Activated CD4-positive, alpha-beta T cell treated with anti-CD3 and anti-CD28 coated beads, Interleukin-2, amount 10 ng/mL, durations not matched to agents 24 days and 14 days (primary cell): ENCODE measurements at regions of chr21 and their contacts with region 1.

Region 1: DNA sequence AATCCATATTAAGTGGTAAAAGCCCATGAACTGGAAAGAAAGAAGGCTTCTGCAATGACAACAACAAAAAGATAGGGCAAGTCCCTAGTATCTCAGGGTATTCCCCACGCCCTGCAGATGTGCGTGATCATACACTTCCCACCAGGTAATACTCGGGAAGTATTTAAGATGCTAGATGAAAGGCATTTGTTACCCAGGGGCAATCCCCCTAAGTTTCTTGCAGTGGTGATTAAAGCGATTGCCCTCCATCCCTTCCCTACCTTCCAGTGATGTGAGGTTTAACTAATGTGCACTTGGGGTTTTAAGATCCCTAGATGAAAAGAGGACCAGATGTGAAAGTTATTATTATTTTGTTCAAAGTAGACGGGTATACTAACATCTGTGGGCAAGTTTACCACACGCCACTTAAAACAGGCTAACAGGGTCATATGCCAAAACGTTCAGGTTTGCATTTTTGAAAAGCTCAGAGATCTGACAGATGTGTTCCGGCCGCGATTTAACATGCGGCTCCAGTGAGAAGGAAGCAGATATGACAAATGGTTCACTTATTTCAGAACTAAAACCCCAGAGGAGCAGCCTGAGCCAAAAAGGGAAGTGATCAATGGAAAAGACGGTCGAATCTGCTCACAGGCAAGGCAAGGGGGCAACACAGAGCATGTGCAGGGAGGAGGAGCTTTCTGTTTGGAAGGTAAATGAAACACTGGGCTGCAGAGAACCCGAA is 17.4 kb downstream of the TIAM1 start:
- DNase-seq: peak; percentile 80
- H3K4me3 Mint-ChIP-seq: peak overlapping the region; percentile 74
- H3K27ac Mint-ChIP-seq: peak overlapping the region; percentile 92
- H3K4me1 Mint-ChIP-seq: peaks cover 28% of the 10 kb centered on the region
- H3K27me3 Mint-ChIP-seq: no peaks in the 10 kb centered on the region

Region 2: GRCh38 chr21:31140676-31141075 is 186.0 kb before region 1 on chr21:
- intact Hi-C with region 1: no loop called
- DNase-seq: no peak
- H3K4me3 Mint-ChIP-seq: no peak overlapping the region
- H3K27ac Mint-ChIP-seq: peak overlapping the region; percentile 0
- H3K4me1 Mint-ChIP-seq: peaks cover 27% of the 10 kb centered on the region
- H3K27me3 Mint-ChIP-seq: no peaks in the 10 kb centered on the region

Region 3: DNA sequence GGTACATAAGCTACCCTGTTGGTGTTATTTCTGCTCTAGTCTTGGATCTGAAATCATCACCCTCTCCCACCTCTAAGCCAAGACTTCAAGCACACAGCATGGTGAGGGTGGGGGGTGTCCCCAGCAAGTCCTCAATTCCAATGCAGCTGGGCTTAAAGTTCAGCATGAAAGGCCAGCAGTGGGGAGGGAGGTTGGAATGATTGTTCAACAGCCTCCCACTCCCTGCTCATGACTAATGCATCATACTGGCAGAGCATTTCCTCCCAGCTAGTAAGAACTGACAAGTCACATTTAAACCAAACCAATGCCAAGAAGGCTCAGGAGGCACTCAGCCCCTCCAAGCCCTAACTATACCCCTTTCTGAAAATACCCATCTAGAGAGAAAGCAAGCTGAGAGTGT is 32.7 kb before region 1 on chr21:
- intact Hi-C with region 1: loop called (anchors 1 kb)
- DNase-seq: peak; percentile 58
- H3K4me3 Mint-ChIP-seq: peak overlapping the region; percentile 54
- H3K27ac Mint-ChIP-seq: peak overlapping the region; percentile 87
- H3K4me1 Mint-ChIP-seq: peaks cover 44% of the 10 kb centered on the region
- H3K27me3 Mint-ChIP-seq: no peaks in the 10 kb centered on the region